ENCODE measurements at regions of chr17 and their contacts with region 1.

Region 1: DNA sequence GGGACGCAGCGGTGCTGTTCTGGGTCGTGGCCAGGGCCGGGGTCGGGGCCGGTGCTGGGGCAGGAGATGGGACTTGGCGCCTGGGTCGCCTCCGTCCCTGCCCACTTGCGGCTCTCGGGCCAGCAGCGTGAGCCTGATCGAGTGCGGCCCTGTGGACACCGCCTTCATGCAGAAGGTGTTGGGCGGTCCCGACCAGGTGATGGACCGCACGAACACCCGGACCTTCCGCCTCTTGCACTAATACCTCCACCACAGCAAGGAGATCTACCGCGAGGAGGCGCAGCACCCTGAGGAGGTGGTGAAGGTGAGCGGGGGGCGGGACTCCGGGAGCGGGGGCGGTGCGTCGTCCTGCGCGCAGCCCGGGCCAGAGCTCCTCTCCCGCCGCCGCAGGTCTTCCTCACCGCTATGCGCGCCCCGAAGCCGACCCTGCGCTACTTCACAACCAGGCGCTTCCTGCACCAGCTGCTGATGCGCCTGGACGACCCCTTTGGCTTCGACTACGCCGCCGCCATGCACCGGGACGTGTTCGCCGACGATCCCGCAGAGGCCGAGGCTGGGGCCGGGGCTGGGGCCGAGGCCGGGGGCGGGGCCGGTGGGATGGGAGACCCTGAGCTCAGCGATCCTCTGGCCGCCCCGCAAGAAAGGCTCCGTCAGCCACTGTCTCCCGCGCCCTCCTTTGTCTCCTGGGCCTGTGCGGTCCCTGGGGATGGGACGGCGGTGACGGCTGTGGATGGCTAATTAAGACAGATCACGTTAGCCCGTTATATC is 4.5 kb upstream of the HSD17B1 start:
- DNase-seq: peak; percentile 91
- ATAC-seq: peak; percentile 91
- H3K4me3 Mint-ChIP-seq: peak overlapping the region; percentile 35
- H3K27ac Mint-ChIP-seq: no peak overlapping the region
- H3K4me1 Mint-ChIP-seq: peaks cover 14% of the 10 kb centered on the region
- H3K27me3 Mint-ChIP-seq: no peaks in the 10 kb centered on the region
- CTCF ChIP-seq: peak; percentile 75

Region 2: DNA sequence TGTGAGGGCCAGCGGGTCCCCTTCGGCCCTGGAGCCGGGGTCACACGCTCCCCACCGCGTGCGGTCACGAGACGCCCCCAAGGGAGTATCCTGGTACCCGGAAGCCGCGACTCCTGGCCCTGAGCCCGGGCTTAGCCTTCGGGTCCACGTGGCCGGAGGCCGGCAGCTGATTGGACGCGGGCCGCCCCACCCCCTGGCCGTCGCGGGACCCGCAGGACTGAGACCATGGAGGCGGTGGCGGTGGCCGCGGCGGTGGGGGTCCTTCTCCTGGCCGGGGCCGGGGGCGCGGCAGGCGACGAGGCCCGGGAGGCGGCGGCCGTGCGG is 12.2 kb before region 1 on chr17 and contains the start of gene NAGLU:
- CTCF ChIA-PET with region 1: interaction called, 11 read pairs
- POLR2A ChIA-PET with region 1: interaction called, 12 read pairs
- intact Hi-C with region 1: no loop called
- DNase-seq: peak; percentile 91
- ATAC-seq: peak; percentile 87
- H3K4me3 Mint-ChIP-seq: peak within 1 kb of the TSS; percentile 84
- H3K27ac Mint-ChIP-seq: peak within 1 kb of the TSS; percentile 77
- H3K4me1 Mint-ChIP-seq: peaks cover 35% of the 10 kb centered on the region
- H3K27me3 Mint-ChIP-seq: no peaks in the 10 kb centered on the region
- CTCF ChIP-seq: no peak
- total RNA-seq, gene NAGLU: 10.8 to 11.4 TPM

Region 3: DNA sequence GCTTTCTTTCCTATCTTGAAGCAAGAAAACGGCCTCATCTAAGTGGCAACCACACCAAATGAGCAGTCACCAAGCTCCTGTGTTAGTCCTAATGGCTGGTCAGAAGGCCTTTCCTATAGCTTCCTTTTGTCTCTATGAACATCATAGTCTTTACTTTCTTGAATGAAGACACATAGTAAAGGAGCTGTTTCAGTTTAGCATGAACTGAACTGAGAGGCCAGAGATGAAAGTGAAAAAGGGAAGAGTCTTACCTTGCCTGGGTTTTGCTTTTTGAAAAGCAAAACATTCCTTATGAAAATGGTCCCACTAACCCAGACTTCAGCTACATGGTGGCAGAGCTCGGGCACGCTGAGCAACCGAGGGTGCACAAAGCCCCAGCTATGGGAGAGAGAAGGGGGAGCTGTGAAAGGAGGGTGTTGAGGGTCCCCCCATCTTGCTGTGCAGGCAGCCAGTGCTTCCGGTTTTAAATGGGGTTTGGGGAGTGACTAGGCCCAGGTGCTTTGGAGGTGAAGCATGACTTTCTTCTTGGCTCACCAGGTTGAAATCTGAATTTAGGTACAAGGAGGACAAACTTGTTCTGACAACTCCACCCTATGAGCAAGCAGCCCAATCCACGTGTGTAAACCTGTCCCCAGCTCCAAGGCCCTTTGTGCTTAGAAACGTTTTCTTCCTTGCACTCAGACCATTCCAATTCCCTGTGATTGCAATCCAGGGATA is 38.4 kb after region 1 on chr17:
- CTCF ChIA-PET with region 1: no interaction called
- POLR2A ChIA-PET with region 1: no interaction called
- intact Hi-C with region 1: no loop called
- DNase-seq: no peak
- ATAC-seq: no peak
- H3K4me3 Mint-ChIP-seq: no peak overlapping the region
- H3K27ac Mint-ChIP-seq: peak overlapping the region; percentile 72
- H3K4me1 Mint-ChIP-seq: peaks cover 2% of the 10 kb centered on the region
- H3K27me3 Mint-ChIP-seq: no peaks in the 10 kb centered on the region
- CTCF ChIP-seq: no peak

Measured in activated CD8-positive, alpha-beta T cell treated with anti-CD3 and anti-CD28 coated beads for 36 hours (primary cell).